ENCODE measurements at regions of chrX and their contacts with region 1.

Region 1: DNA sequence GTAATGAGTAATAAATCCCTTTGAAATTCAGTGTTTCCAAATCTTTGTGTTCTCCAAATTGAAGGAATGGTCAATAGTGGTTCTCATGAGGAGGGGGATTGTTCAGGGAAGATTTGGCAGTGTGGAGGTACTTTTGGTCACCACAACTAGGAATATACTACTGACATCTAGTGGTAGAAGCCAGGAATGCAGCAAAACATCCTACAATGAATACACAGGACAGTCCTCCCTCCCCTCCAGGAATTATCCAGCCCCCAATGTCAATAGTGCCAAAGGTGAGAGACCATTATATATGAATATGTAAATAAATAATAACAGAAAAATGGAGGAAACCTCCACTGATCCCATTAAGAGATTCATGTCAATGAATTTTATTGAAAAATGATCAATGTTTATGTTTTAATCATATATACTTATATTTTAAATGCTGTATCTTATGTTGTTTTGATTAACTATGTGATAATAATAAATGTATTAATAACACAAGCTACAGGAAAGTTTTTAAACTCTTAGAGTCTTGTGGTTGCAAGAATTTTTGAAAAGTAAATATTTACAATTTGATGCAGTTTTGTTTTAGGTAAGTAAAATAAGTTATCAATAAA is 14.4 kb upstream of the FAM9A start:
- DNase-seq: peak in 1 of 2 donors; percentile 62
- ATAC-seq: peak in 1 of 3 donors; percentile 70
- H3K4me3 ChIP-seq: no peak overlapping the region
- H3K4me3 Mint-ChIP-seq: no peak overlapping the region
- H3K27ac ChIP-seq: no peak overlapping the region
- H3K27ac Mint-ChIP-seq: no peak overlapping the region
- H3K4me1 ChIP-seq: no peaks in the 10 kb centered on the region
- H3K4me1 Mint-ChIP-seq: no peaks in the 10 kb centered on the region
- H3K27me3 ChIP-seq: no peaks in the 10 kb centered on the region
- H3K27me3 Mint-ChIP-seq: peaks cover 0 to 3% of the 10 kb centered on the region in 2 donors
- CTCF ChIP-seq: peak; percentile 70

Region 2: GRCh38 chrX:7996414-7996813 is 819.2 kb before region 1 on chrX:
- intact Hi-C with region 1: loop called (anchors 5 kb)
- DNase-seq: peak in 1 of 2 donors; percentile 63
- ATAC-seq: peak in 2 of 3 donors; percentile 31 to 67
- H3K4me3 ChIP-seq: no peak overlapping the region
- H3K4me3 Mint-ChIP-seq: no peak overlapping the region
- H3K27ac ChIP-seq: no peak overlapping the region
- H3K27ac Mint-ChIP-seq: no peak overlapping the region
- H3K4me1 ChIP-seq: no peaks in the 10 kb centered on the region
- H3K4me1 Mint-ChIP-seq: no peaks in the 10 kb centered on the region
- H3K27me3 ChIP-seq: no peaks in the 10 kb centered on the region
- H3K27me3 Mint-ChIP-seq: no peaks in the 10 kb centered on the region
- CTCF ChIP-seq: peak; percentile 56

Region 3: DNA sequence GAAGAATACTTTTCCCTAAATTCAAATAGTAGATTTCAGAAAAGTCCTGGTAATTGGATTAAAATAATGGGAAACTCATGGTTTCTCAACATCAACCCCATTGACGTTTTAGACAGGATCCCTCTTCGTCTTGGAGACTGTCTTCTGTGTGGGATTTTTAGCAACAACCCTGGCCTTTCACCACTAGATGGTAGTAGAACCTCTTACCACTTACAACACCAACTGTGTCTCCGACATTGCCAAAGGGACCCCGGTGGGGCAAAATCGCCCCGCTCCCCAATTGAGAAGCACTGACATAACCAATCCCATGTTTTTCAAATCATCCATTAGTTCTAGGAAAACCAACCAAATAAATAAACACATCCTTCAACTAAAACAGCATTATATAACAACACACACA is 66.7 kb before region 1 on chrX:
- intact Hi-C with region 1: loop called (anchors 1 kb)
- DNase-seq: peak in 1 of 2 donors; percentile 47
- ATAC-seq: peak in 2 of 3 donors; percentile 58 to 71
- H3K4me3 ChIP-seq: no peak overlapping the region
- H3K4me3 Mint-ChIP-seq: no peak overlapping the region
- H3K27ac ChIP-seq: no peak overlapping the region
- H3K27ac Mint-ChIP-seq: no peak overlapping the region
- H3K4me1 ChIP-seq: no peaks in the 10 kb centered on the region
- H3K4me1 Mint-ChIP-seq: peaks cover 0 to 5% of the 10 kb centered on the region in 2 donors
- H3K27me3 ChIP-seq: no peaks in the 10 kb centered on the region
- H3K27me3 Mint-ChIP-seq: peaks cover 4 to 8% of the 10 kb centered on the region in 2 donors
- CTCF ChIP-seq: peak; percentile 30